PC-9 (cell line): ENCODE measurements at regions of chr18 and their contacts with region 1.

Region 1: GRCh38 chr18:49412679-49413078 is 47.8 kb downstream of the DYM start:
- DNase-seq: no peak
- H3K4me3 ChIP-seq: no peak overlapping the region
- H3K27ac ChIP-seq: no peak overlapping the region
- H3K4me1 ChIP-seq: no peaks in the 10 kb centered on the region
- H3K27me3 ChIP-seq: no peaks in the 10 kb centered on the region
- CTCF ChIP-seq: no peak

Region 2: DNA sequence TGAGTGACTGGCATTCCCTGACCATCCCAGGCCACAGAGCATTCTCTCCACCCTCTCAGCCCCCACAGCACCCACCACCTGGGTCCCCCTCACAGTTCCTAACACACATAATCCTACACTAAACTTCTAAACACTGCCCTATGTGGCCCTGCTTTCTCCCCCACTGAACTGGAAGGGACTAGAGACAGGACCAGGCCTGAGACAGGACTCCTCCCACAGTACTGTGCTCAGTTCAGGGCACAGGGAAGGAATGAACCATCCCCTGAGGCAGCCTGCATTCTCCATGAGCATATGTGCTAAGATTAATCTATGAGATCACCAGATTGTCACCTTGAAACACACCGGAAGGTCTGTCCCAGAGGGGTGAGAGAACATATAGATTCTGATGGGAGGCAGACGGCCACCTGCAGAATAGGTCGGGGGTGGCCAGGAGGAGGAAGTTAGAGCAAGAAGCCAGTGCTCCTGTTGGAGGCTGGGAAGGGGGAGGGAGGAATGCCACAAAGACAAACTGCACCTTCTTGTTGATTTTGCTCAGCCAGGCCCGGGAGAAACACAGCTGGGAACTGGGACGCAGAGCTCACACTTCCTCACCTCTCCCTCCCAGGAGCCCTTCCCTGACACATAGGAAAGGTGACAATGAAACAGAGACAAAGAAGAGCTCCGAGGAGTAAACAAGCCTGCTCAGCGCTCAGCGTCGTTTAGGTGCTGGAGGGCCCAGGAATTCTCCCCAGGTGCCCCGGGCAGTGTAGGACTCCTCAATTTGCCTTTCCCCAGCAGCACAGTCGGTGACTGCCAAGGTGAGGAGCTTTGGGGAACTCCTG is 1055.7 kb before region 1 on chr18:
- CTCF ChIA-PET with region 1: no interaction called
- POLR2A ChIA-PET with region 1: no interaction called
- intact Hi-C with region 1: no loop called
- DNase-seq: peak; percentile 8 to 93
- H3K4me3 ChIP-seq: peak overlapping the region; percentile 10; the same call in 1 of the 2 replicates
- H3K27ac ChIP-seq: peak overlapping the region; percentile 66
- H3K4me1 ChIP-seq: peaks cover 32% of the 10 kb centered on the region
- H3K27me3 ChIP-seq: no peaks in the 10 kb centered on the region
- CTCF ChIP-seq: no peak

Region 3: DNA sequence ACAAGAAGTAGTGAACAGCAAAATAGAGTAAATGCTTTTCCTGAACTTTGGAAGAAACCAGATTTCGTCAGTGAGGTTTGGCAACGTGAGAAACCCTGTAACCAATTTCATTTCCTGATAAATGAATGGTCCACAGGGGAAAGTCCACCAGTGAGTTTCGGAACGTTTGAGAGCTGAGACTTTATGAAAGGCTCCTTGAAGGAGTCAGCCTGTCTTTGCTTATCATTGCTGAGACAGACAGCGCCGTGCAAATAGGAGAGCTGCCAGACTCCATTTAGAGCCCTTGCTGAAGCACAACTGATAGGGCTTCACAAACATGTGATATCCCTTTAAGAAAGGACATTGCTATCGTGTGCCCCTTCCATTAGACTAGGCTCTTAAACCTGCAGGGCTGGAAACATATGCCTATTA is 340.1 kb before region 1 on chr18:
- CTCF ChIA-PET with region 1: no interaction called
- POLR2A ChIA-PET with region 1: no interaction called
- intact Hi-C with region 1: no loop called
- DNase-seq: no peak
- H3K4me3 ChIP-seq: no peak overlapping the region
- H3K27ac ChIP-seq: no peak overlapping the region
- H3K4me1 ChIP-seq: no peaks in the 10 kb centered on the region
- H3K27me3 ChIP-seq: no peaks in the 10 kb centered on the region
- CTCF ChIP-seq: no peak

Region 4: DNA sequence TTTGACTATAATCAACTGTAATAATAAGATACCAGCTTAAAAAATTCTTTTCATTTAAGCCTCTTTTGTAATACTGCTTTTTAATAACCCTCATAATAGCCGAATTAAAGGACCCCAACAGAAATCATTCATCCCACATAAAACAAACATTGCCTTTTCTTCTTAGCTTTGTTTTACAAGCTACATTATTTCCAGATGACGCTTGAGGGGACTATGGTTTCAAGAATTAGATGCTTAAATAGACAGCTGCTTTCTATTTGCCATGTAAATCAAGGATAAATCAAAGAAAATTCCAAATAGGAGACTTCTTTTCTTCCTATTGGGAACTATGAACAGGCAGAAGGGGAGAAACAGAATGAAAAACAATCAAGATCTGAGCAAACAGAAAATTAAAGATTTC is 261.2 kb before region 1 on chr18:
- CTCF ChIA-PET with region 1: no interaction called
- POLR2A ChIA-PET with region 1: no interaction called
- intact Hi-C with region 1: no loop called
- DNase-seq: no peak
- H3K4me3 ChIP-seq: no peak overlapping the region
- H3K27ac ChIP-seq: no peak overlapping the region
- H3K4me1 ChIP-seq: no peaks in the 10 kb centered on the region
- H3K27me3 ChIP-seq: no peaks in the 10 kb centered on the region
- CTCF ChIP-seq: no peak

Region 5: GRCh38 chr18:49238433-49239042 is 174.1 kb before region 1 on chr18:
- CTCF ChIA-PET with region 1: no interaction called
- POLR2A ChIA-PET with region 1: no interaction called
- intact Hi-C with region 1: loop called (anchors 2 kb)
- DNase-seq: peak in 1 of 2 experiments; percentile 7
- H3K4me3 ChIP-seq: no peak overlapping the region
- H3K27ac ChIP-seq: no peak overlapping the region
- H3K4me1 ChIP-seq: no peaks in the 10 kb centered on the region
- H3K27me3 ChIP-seq: no peaks in the 10 kb centered on the region
- CTCF ChIP-seq: peak; percentile 77

Region 6: DNA sequence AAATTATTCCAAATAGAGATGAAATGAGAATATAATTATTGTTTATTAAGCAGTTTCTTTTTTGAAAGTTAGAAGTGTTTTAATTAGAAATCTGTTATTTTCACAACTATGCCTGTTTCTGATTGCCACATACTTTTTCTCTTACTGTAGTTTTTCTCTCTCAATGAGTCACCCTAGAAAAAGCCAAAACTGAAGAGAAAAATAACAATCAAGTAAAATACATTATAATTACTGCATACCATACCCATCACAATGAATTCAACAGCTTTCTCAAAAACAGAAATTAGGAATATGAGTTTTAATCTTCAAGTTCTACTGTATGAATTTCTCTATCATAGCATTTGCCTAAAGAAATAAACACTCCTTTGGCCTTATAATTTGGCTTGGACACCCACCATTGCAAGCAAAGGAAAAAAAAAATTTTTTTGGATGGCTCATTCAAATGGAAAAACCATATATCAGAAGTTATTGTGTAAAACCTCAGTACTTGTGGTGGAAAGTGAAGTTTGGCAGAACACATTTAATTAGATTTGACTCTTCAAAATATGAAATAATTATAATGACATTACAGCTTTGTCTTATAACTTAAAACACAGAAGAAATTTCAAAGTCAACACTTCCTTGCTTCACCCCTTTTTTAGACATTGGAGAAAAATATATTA is 90.7 kb before region 1 on chr18:
- CTCF ChIA-PET with region 1: no interaction called
- POLR2A ChIA-PET with region 1: no interaction called
- intact Hi-C with region 1: no loop called
- DNase-seq: no peak
- H3K4me3 ChIP-seq: no peak overlapping the region
- H3K27ac ChIP-seq: peak overlapping the region; percentile 55
- H3K4me1 ChIP-seq: peaks cover 13% of the 10 kb centered on the region
- H3K27me3 ChIP-seq: no peaks in the 10 kb centered on the region
- CTCF ChIP-seq: no peak

Region 7: GRCh38 chr18:49432602-49433001 is 19.9 kb after region 1 on chr18:
- CTCF ChIA-PET with region 1: interaction called, 4 read pairs
- POLR2A ChIA-PET with region 1: interaction called, 12 read pairs
- intact Hi-C with region 1: no loop called
- DNase-seq: no peak
- H3K4me3 ChIP-seq: no peak overlapping the region
- H3K27ac ChIP-seq: no peak overlapping the region
- H3K4me1 ChIP-seq: no peaks in the 10 kb centered on the region
- H3K27me3 ChIP-seq: no peaks in the 10 kb centered on the region
- CTCF ChIP-seq: no peak